ENCODE measurements at regions of chr3 and their contacts with region 1.

Region 1: GRCh38 chr3:151468284-151468917 is 7.5 kb upstream of the IGSF10 start:
- DNase-seq: no peak
- ATAC-seq: peak; percentile 93
- H3K4me3 ChIP-seq: no peak overlapping the region
- H3K27ac ChIP-seq: no peak overlapping the region
- H3K4me1 ChIP-seq: no peaks in the 10 kb centered on the region
- H3K27me3 ChIP-seq: no peaks in the 10 kb centered on the region; a peak in 1 of 4 replicates
- CTCF ChIP-seq: peak; percentile 71 to 88 (median 86)
- EP300 ChIP-seq: no peak
- POLR2A ChIP-seq: no peak
- RAD21 ChIP-seq: peak; percentile 67

Region 2: GRCh38 chr3:151276687-151277042 is 191.7 kb before region 1 on chr3:
- CTCF ChIA-PET with region 1: no interaction called
- POLR2A ChIA-PET with region 1: no interaction called
- RAD21 ChIA-PET with region 1: no interaction called
- SMC1A ChIA-PET with region 1: no interaction called
- in situ Hi-C with region 1: no loop called
- intact Hi-C with region 1: no loop called
- DNase-seq: no peak
- ATAC-seq: peak; percentile 87
- H3K4me3 ChIP-seq: no peak overlapping the region; the same call in 1 of the 2 replicates
- H3K27ac ChIP-seq: no peak overlapping the region
- H3K4me1 ChIP-seq: peaks cover 36% of the 10 kb centered on the region
- H3K27me3 ChIP-seq: no peaks in the 10 kb centered on the region
- CTCF ChIP-seq: no peak
- EP300 ChIP-seq: no peak
- POLR2A ChIP-seq: no peak
- RAD21 ChIP-seq: no peak

Region 3: DNA sequence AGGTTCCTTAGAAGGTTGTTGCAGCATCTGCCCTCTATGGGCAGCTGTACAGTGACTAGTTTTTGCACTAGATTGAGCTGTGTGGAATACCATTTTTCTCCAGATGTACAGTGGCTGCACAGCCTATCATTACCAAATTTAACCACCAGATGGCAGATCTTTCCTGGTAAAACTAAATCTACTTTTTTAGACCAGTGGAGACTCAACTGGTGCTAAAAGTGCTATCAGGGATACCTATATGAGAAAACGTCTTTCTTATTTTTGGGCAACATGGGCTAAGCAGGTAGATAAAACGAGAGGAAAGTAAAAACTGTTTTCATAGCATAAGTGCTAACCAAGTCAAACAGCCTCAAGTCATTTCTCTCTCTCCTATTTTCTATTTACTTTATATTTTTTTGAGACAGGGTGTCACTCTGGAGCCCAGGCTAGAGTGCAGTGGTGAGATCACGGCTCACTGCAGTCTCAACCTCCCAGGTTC is 28.7 kb before region 1 on chr3:
- CTCF ChIA-PET with region 1: interaction called, 16 read pairs
- POLR2A ChIA-PET with region 1: no interaction called
- RAD21 ChIA-PET with region 1: no interaction called
- SMC1A ChIA-PET with region 1: interaction called, 8 read pairs
- in situ Hi-C with region 1: no loop called
- intact Hi-C with region 1: no loop called
- DNase-seq: no peak
- ATAC-seq: peak; percentile 92
- H3K4me3 ChIP-seq: no peak overlapping the region
- H3K27ac ChIP-seq: no peak overlapping the region
- H3K4me1 ChIP-seq: no peaks in the 10 kb centered on the region
- H3K27me3 ChIP-seq: no peaks in the 10 kb centered on the region
- CTCF ChIP-seq: peak; percentile 63 to 70 (median 70)
- EP300 ChIP-seq: no peak
- POLR2A ChIP-seq: no peak
- RAD21 ChIP-seq: peak; percentile 68

Region 4: DNA sequence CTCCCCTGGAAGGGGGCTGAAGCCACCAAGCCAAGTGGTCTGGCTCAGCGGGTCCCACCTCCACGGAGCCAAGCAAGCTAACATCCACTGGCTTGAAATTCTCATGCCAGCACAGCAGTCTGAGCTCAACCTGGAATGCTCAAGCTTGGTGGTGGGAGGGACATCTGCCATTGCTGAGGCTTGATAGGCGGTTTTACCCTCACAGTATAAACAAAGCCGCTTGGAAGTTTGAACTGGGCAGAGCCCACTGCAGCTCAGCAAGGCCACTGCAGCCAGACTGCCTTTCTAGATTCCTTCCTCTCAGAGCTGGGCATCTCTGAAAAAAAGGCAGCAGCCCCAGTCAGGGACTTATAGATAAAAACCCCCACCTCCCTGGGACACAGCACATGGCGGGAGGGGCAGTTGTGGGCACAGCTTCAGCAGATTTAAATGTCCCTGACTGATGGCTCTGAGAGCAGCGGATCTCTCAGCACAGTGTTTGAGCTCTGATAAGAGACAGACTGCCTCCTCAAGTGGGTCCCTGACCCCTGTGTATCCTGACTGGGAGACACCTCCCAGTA is 15.6 kb after region 1 on chr3:
- CTCF ChIA-PET with region 1: interaction called, 19 read pairs
- POLR2A ChIA-PET with region 1: no interaction called
- RAD21 ChIA-PET with region 1: no interaction called
- SMC1A ChIA-PET with region 1: interaction called, 3 read pairs
- in situ Hi-C with region 1: no loop called
- intact Hi-C with region 1: no loop called
- DNase-seq: no peak
- ATAC-seq: no peak
- H3K4me3 ChIP-seq: no peak overlapping the region
- H3K27ac ChIP-seq: no peak overlapping the region
- H3K4me1 ChIP-seq: no peaks in the 10 kb centered on the region
- H3K27me3 ChIP-seq: no peaks in the 10 kb centered on the region; a peak in 1 of 4 replicates
- CTCF ChIP-seq: no peak
- EP300 ChIP-seq: no peak
- POLR2A ChIP-seq: no peak
- RAD21 ChIP-seq: no peak

Region 5: GRCh38 chr3:151660885-151661284 is 192.5 kb after region 1 on chr3:
- CTCF ChIA-PET with region 1: interaction called, 8 read pairs
- POLR2A ChIA-PET with region 1: no interaction called
- RAD21 ChIA-PET with region 1: no interaction called
- SMC1A ChIA-PET with region 1: interaction called, 3 read pairs
- in situ Hi-C with region 1: no loop called
- intact Hi-C with region 1: loop called (anchors 10 kb)
- DNase-seq: no peak
- ATAC-seq: no peak
- H3K4me3 ChIP-seq: no peak overlapping the region
- H3K27ac ChIP-seq: no peak overlapping the region
- H3K4me1 ChIP-seq: no peaks in the 10 kb centered on the region
- H3K27me3 ChIP-seq: no peaks in the 10 kb centered on the region
- CTCF ChIP-seq: no peak
- EP300 ChIP-seq: no peak
- POLR2A ChIP-seq: no peak
- RAD21 ChIP-seq: no peak

Region 6: DNA sequence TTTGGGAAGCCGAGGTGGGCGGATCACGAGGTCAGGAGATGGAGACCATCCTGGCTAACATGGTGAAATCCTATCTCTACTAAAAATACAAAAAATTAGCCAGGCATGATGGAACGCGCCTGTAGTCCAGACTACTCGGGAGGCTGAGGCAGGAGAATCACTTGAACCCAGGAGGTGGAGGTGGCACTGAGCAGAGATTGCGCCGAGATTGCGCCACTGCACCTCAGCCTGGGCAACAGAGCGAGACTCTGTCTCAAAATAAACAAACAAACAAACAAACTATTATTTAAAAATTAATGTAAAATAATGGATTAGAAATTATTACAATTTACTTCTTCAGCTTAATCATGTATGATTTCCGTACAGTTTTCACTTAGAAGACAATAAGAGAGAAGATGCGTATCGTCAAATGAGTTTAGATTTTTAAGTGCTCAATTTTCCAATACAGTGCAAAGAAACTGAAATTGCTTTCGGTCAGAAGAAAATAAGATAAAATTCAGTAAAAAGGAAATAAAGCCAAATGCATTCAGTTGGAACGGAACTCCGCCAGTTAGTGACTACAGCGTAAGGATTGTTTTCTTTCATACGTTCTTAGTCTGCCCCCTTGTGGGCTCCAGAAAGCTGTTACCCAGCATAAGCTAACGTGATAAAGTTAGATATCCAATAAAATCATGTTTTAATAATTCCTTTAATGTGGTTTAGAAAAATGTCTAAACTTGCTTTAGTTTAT is 370.3 kb after region 1 on chr3:
- CTCF ChIA-PET with region 1: interaction called, 55 read pairs
- POLR2A ChIA-PET with region 1: no interaction called
- RAD21 ChIA-PET with region 1: interaction called, 11 read pairs
- SMC1A ChIA-PET with region 1: interaction called, 11 read pairs
- in situ Hi-C with region 1: no loop called
- intact Hi-C with region 1: loop called (anchors 1 kb)
- DNase-seq: peak; percentile 2
- ATAC-seq: peak; percentile 87
- H3K4me3 ChIP-seq: no peak overlapping the region
- H3K27ac ChIP-seq: no peak overlapping the region
- H3K4me1 ChIP-seq: no peaks in the 10 kb centered on the region
- H3K27me3 ChIP-seq: no peaks in the 10 kb centered on the region
- CTCF ChIP-seq: peak; percentile 66 to 75 (median 73); a peak in 5 of 6 replicates
- EP300 ChIP-seq: no peak
- POLR2A ChIP-seq: no peak
- RAD21 ChIP-seq: peak; percentile 87

Region 7: DNA sequence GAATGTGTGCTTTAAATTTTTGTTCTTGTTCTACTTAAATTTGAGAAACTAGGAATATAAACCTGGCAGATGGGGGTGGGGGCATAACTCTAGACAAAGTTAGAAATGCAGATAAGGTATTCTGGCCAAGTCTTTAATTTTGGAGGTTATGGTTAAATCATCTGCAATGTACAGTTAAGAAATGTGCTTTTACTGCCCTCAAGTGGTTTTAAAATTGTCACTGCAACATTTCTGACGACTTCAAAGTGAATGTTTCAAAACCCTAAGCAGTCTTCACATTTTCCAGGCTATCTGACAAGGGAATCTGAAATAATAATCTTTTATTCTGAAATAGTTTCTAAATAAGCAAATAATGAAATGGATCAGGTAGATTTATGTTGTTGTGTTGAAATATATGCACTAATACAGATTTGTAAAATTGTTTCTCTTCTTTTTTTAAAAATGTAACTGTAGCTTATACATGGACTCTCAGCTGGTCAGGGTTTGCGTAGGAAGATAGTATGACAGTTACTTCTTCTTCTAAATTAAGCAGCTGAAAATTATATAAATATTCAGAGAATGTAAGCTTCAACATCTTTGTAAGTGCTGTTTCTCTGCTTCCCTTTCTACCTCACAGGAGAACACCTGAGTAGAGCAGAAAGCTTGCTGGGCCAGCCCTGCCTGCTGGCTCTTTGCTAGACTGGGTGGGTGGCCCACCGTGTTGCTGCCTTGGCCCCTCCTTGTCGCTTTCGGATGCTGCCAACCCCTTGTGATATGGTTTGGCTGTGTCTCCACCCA is 450.0 kb after region 1 on chr3:
- CTCF ChIA-PET with region 1: interaction called, 20 read pairs
- POLR2A ChIA-PET with region 1: no interaction called
- RAD21 ChIA-PET with region 1: interaction called, 7 read pairs
- SMC1A ChIA-PET with region 1: interaction called, 7 read pairs
- in situ Hi-C with region 1: no loop called
- intact Hi-C with region 1: loop called (anchors 1 kb)
- DNase-seq: peak; percentile 16
- ATAC-seq: peak; percentile 89
- H3K4me3 ChIP-seq: no peak overlapping the region
- H3K27ac ChIP-seq: no peak overlapping the region
- H3K4me1 ChIP-seq: no peaks in the 10 kb centered on the region
- H3K27me3 ChIP-seq: no peaks in the 10 kb centered on the region
- CTCF ChIP-seq: peak; percentile 44 to 74 (median 55); a peak in 5 of 6 replicates
- EP300 ChIP-seq: no peak
- POLR2A ChIP-seq: no peak
- RAD21 ChIP-seq: peak; percentile 86

Measured in GM12878 (cell line).